Astrocyte of the cerebellum (primary cell): ENCODE measurements at regions of chr5 and their contacts with region 1.

Region 1: DNA sequence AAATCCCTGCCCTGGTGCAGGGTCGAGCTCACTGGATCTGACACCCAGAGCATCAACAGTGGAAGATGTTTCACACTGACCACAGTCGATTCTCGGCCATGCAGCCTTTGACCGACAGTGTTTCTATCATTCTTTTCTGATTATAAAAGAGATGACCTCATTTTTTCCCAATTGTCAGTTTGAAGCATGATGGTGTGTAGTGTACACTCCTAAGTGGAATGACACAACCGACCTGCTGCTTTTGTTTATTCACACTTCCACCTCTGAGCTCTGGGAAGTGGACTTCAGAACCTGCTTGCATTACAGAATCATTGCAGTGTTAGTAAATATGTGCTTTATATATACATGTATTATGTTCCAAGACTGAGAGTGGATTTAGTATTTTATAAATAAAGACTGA is 128.6 kb downstream of the IRX2 start:
- DNase-seq: no peak
- H3K4me3 ChIP-seq: no peak overlapping the region
- CTCF ChIP-seq: no peak

Region 2: DNA sequence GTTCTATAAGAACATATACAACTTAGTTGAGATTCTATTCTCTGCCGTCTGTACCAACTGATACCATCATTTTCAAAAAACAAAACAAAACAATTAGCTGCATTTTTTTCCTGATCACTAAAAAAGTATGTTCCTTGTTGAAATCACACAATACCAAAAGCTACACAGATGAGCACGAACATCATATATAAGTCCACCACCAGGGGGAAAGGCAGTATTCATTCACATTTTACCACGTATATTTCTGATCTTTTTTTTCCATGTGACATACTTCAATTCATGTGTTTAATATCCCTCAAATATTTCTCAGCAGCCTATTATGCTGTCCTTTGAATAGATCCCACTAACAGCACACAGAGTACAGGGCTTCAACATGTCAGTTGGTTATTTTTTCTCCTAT is 88.1 kb after region 1 on chr5:
- in situ Hi-C with region 1: loop called (anchors 5 kb)
- DNase-seq: no peak
- H3K4me3 ChIP-seq: no peak overlapping the region
- CTCF ChIP-seq: peak; percentile 37